PC-9 (cell line): ENCODE measurements at regions of chr6 and their contacts with region 1.

Region 1: GRCh38 chr6:26270903-26271667 is 93.9 kb upstream of the BTN3A2 start:
- DNase-seq: peak; percentile 65 to 80
- H3K4me3 ChIP-seq: peak overlapping the region; percentile 73
- H3K27ac ChIP-seq: peak overlapping the region; percentile 62
- H3K4me1 ChIP-seq: peaks cover 24% of the 10 kb centered on the region
- H3K27me3 ChIP-seq: no peaks in the 10 kb centered on the region
- CTCF ChIP-seq: no peak

Region 2: DNA sequence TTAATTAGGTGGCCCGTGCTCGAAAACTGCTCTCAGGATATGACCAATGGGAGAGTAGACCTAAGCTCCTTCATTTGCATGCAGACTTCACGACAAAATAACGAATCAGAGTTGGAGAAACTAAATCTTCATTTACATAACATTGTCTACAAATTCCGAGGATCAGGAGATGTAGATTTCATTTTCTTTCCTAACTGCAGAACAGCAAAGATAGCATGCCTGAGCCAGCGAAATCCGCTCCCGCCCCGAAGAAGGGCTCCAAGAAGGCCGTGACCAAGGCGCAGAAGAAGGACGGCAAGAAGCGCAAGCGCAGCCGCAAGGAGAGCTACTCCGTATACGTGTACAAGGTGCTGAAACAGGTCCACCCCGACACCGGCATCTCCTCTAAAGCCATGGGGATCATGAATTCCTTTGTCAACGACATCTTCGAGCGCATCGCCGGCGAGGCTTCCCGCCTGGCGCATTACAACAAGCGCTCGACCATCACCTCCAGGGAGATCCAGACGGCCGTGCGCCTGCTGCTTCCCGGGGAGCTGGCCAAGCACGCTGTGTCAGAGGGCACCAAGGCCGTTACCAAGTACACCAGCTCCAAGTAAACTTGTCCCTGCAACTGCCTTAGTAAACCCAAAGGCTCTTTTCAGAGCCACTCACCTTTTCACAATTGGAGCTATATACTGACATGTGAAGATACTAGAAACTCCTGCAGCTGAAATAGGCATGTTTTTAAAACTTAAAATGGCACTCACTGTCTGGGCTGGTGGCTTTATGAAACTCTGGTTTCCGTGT is 87.3 kb before region 1 on chr6:
- CTCF ChIA-PET with region 1: no interaction called
- POLR2A ChIA-PET with region 1: interaction called, 11 read pairs
- intact Hi-C with region 1: no loop called
- DNase-seq: peak; percentile 72 to 87
- H3K4me3 ChIP-seq: peak overlapping the region; percentile 54
- H3K27ac ChIP-seq: peak overlapping the region; percentile 65
- H3K4me1 ChIP-seq: peaks cover 12% of the 10 kb centered on the region; the same call in 1 of the 2 replicates
- H3K27me3 ChIP-seq: no peaks in the 10 kb centered on the region
- CTCF ChIP-seq: no peak

Region 3: GRCh38 chr6:26223650-26224546 is 47.2 kb before region 1 on chr6:
- CTCF ChIA-PET with region 1: interaction called, 6 read pairs
- POLR2A ChIA-PET with region 1: interaction called, 55 read pairs
- intact Hi-C with region 1: no loop called
- DNase-seq: peak; percentile 71 to 96
- H3K4me3 ChIP-seq: peak overlapping the region; percentile 96
- H3K27ac ChIP-seq: peak overlapping the region; percentile 96
- H3K4me1 ChIP-seq: peaks cover 18% of the 10 kb centered on the region
- H3K27me3 ChIP-seq: no peaks in the 10 kb centered on the region
- CTCF ChIP-seq: no peak

Region 4: GRCh38 chr6:26285143-26286134 is 14.4 kb after region 1 on chr6:
- CTCF ChIA-PET with region 1: no interaction called
- POLR2A ChIA-PET with region 1: interaction called, 12 read pairs
- intact Hi-C with region 1: loop called (anchors 1 kb)
- DNase-seq: peak; percentile 96 to 99
- H3K4me3 ChIP-seq: peak overlapping the region; percentile 84
- H3K27ac ChIP-seq: peak overlapping the region; percentile 93
- H3K4me1 ChIP-seq: peaks cover 11% of the 10 kb centered on the region
- H3K27me3 ChIP-seq: no peaks in the 10 kb centered on the region
- CTCF ChIP-seq: no peak

Region 5: DNA sequence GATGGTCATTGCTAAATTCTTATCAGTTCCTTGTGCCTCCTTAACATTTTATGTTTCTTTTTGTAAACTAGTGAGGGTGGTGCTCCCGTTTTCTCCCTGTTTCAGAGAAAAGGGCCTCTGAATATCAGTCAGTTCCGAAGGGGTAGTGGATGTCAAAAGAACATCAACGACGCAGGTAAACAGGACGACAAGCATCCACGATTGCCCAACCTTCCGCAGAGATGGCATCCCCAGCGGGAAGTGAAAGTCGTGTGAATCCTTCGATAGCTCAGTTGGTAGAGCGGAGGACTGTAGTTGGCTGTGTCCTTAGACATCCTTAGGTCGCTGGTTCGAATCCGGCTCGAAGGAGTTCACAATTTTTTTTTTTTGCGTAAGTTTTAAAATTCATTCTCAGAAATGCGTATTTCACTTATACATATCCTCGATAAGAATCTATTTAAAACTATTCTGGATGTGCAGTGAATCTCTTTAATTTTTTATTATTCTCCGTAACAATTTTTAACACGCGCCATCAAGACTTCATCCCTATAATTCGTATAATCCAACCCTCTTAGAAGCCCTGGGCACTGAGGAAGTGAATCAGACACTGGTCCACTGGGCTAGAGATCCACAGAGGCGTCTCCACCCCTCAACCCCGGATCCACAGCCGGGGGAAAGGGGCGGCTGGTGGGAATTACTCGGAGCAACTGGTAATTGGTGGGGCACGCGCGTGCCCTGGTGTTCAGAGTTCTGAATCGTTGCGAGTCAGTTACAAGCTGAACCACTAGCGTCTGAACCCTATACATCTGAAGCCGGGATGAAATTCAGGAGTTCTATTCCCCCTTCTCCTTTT is 297.7 kb after region 1 on chr6:
- CTCF ChIA-PET with region 1: interaction called, 12 read pairs
- POLR2A ChIA-PET with region 1: no interaction called
- intact Hi-C with region 1: no loop called
- DNase-seq: peak; percentile 90 to 97
- H3K4me3 ChIP-seq: peak overlapping the region; percentile 59
- H3K27ac ChIP-seq: no peak overlapping the region
- H3K4me1 ChIP-seq: no peaks in the 10 kb centered on the region
- H3K27me3 ChIP-seq: no peaks in the 10 kb centered on the region
- CTCF ChIP-seq: peak; percentile 13; the same call in 1 of the 2 replicates

Region 6: DNA sequence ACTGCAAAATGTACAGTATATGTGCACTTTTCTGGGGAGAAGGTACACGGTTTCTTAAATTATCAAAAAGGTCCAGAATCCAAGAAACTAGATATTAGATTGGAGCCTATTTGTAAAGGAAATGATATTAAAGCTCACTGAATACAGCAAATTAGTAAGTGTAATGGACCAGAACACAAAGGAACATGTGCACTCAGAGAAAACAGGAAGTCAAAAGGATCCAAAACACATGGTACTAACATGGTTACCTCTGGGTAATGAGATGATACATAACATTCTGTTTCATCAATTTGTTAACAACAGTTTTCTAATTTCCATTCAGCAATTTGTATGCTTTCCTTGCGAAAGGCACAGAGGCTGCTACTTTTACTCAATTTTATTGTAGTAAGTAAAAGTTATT is 369.7 kb after region 1 on chr6:
- CTCF ChIA-PET with region 1: no interaction called
- POLR2A ChIA-PET with region 1: no interaction called
- intact Hi-C with region 1: no loop called
- DNase-seq: no peak
- H3K4me3 ChIP-seq: no peak overlapping the region
- H3K27ac ChIP-seq: no peak overlapping the region
- H3K4me1 ChIP-seq: no peaks in the 10 kb centered on the region
- H3K27me3 ChIP-seq: no peaks in the 10 kb centered on the region
- CTCF ChIP-seq: no peak